Activated CD4-positive, alpha-beta T cell treated with anti-CD3 and anti-CD28 coated beads for 36 hours (primary cell): ENCODE measurements at regions of chr5 and their contacts with region 1.

Region 1: GRCh38 chr5:131417240-131417869 is 153.5 kb downstream of the CDC42SE2 start:
- DNase-seq: peak; percentile 92
- ATAC-seq: no peak
- H3K4me3 Mint-ChIP-seq: no peak overlapping the region
- H3K27ac Mint-ChIP-seq: peak overlapping the region; percentile 40
- H3K4me1 Mint-ChIP-seq: peaks cover 43% of the 10 kb centered on the region
- H3K27me3 Mint-ChIP-seq: no peaks in the 10 kb centered on the region

Region 2: GRCh38 chr5:130871346-130872086 is 545.8 kb before region 1 on chr5:
- CTCF ChIA-PET with region 1: interaction called, 7 read pairs
- POLR2A ChIA-PET with region 1: no interaction called
- intact Hi-C with region 1: loop called (anchors 1 to 2 kb)
- DNase-seq: peak; percentile 57
- ATAC-seq: peak; percentile 71
- H3K4me3 Mint-ChIP-seq: no peak overlapping the region
- H3K27ac Mint-ChIP-seq: no peak overlapping the region
- H3K4me1 Mint-ChIP-seq: peaks cover 7% of the 10 kb centered on the region
- H3K27me3 Mint-ChIP-seq: no peaks in the 10 kb centered on the region

Region 3: DNA sequence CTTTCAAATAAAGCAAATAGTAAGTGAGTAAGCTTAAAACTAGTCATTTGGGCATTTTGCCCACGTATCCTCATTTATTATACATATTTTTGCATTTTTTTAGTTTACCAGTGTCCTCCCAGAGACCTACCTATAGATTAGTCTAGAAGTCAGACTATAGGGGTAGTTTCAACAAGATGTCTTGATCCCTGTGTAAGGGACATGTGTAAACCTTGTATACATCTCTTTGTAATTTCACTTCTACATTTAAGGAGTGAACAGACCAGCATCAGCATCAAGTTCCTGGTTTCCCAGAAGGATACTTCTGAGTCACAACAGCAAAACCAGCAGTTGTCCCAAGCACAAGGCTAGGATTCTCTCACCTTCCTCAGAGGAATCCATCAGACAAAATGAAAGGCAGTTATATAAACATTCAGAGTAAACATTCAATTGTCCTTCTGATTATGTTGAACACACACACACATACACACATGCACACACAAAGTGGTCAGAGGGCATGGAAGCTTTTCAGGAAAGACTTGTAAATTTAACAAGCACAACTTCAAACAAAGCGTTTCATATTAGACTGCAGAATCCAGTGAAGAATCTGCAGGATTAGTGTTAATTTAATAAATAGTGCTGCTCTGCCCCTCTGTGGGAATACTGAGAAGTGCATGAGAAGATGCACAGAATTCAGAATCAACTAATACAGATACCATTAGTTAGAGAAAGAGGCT is 307.7 kb before region 1 on chr5:
- CTCF ChIA-PET with region 1: no interaction called
- POLR2A ChIA-PET with region 1: no interaction called
- intact Hi-C with region 1: loop called in 1 of 2 experiments (anchors 2 kb)
- DNase-seq: peak; percentile 30
- ATAC-seq: peak; percentile 79
- H3K4me3 Mint-ChIP-seq: no peak overlapping the region
- H3K27ac Mint-ChIP-seq: no peak overlapping the region
- H3K4me1 Mint-ChIP-seq: peaks cover 4% of the 10 kb centered on the region
- H3K27me3 Mint-ChIP-seq: no peaks in the 10 kb centered on the region

Region 4: GRCh38 chr5:131364507-131365050 is 52.8 kb before region 1 on chr5:
- CTCF ChIA-PET with region 1: no interaction called
- POLR2A ChIA-PET with region 1: interaction called, 10 read pairs
- intact Hi-C with region 1: no loop called
- DNase-seq: no peak
- ATAC-seq: peak; percentile 59
- H3K4me3 Mint-ChIP-seq: no peak overlapping the region
- H3K27ac Mint-ChIP-seq: peak overlapping the region; percentile 87
- H3K4me1 Mint-ChIP-seq: peaks cover 82% of the 10 kb centered on the region
- H3K27me3 Mint-ChIP-seq: no peaks in the 10 kb centered on the region

Region 5: DNA sequence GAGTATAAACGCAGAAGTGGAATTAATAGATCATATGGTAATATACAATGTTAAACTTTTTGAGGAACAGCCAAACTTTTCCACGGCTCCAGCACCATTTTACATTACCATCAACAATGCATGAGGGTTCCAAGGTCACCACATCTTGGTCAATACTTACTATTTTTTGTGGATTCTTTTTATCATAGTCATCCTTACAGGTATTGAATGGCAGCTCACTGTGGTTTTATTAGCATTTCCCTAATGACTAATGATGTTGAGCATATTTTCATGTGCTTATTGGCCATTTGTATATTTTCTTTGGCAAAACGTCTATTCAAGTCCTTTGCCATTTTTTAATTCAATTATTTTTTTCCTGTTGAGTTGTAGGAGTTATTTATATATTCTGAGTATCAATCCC is 231.8 kb after region 1 on chr5:
- CTCF ChIA-PET with region 1: no interaction called
- POLR2A ChIA-PET with region 1: no interaction called
- intact Hi-C with region 1: no loop called
- DNase-seq: no peak
- ATAC-seq: no peak
- H3K4me3 Mint-ChIP-seq: no peak overlapping the region
- H3K27ac Mint-ChIP-seq: no peak overlapping the region
- H3K4me1 Mint-ChIP-seq: no peaks in the 10 kb centered on the region
- H3K27me3 Mint-ChIP-seq: no peaks in the 10 kb centered on the region

Region 6: DNA sequence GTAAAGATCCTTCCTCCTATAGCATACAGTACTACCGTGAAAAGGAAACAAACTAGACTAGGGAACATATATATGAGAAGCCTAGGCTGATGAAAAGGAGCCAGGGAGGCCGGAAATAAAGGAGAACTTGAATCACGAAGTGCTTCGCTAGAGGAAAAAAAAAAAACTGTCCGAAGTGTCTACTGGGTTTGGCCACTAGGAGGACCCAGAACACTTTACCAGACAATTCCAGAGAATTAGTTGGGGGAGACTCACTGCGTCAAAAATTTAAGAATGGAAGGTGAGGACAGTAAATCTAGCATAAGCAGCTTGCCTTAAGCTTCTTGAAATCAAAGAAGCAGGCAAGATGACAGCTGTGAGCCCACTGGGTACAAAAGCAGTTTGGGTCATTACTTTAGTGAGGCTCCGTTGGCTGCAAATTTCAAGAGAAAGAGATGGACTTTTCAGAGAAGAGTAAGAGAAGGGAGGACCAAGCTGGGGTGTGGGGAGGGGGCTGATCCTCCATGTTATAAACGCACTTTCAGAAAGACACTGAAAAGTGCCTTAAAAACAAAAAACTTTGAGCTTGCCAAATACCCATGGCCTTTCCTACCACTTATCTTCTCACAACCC is 762.9 kb after region 1 on chr5:
- CTCF ChIA-PET with region 1: no interaction called
- POLR2A ChIA-PET with region 1: no interaction called
- intact Hi-C with region 1: no loop called
- DNase-seq: peak; percentile 19
- ATAC-seq: peak; percentile 38
- H3K4me3 Mint-ChIP-seq: no peak overlapping the region
- H3K27ac Mint-ChIP-seq: peak overlapping the region; percentile 73
- H3K4me1 Mint-ChIP-seq: peaks cover 36% of the 10 kb centered on the region
- H3K27me3 Mint-ChIP-seq: no peaks in the 10 kb centered on the region